Transverse colon (tissue), 4 donors: ENCODE measurements at regions of chr19 and their contacts with region 1.

Region 1: GRCh38 chr19:46487802-46488445 is 7.7 kb downstream of the PNMA8B start:
- DNase-seq: peak; percentile 76
- H3K4me3 ChIP-seq: peak overlapping the region in 1 of 4 donors; percentile 40
- H3K27ac ChIP-seq: no peak overlapping the region
- H3K4me1 ChIP-seq: peaks cover 2 to 25% (median 14%) of the 10 kb centered on the region in 4 donors
- H3K27me3 ChIP-seq: peaks cover 73% of the 10 kb centered on the region
- CTCF ChIP-seq: peak; percentile 88 to 96 (median 91)
- EP300 ChIP-seq: no peak
- POLR2A ChIP-seq: no peak

Region 2: GRCh38 chr19:46283771-46284170 is 204.2 kb before region 1 on chr19:
- in situ Hi-C with region 1: loop called in 3 of 4 experiments (anchors 5 to 25 kb)
- intact Hi-C with region 1: loop called (anchors 5 kb)
- DNase-seq: no peak
- H3K4me3 ChIP-seq: no peak overlapping the region
- H3K27ac ChIP-seq: peak overlapping the region in 2 of 4 donors; percentile 17 to 30
- H3K4me1 ChIP-seq: peaks cover 0 to 6% (median 0%) of the 10 kb centered on the region in 4 donors
- H3K27me3 ChIP-seq: no peaks in the 10 kb centered on the region
- CTCF ChIP-seq: no peak
- EP300 ChIP-seq: no peak
- POLR2A ChIP-seq: no peak

Region 3: DNA sequence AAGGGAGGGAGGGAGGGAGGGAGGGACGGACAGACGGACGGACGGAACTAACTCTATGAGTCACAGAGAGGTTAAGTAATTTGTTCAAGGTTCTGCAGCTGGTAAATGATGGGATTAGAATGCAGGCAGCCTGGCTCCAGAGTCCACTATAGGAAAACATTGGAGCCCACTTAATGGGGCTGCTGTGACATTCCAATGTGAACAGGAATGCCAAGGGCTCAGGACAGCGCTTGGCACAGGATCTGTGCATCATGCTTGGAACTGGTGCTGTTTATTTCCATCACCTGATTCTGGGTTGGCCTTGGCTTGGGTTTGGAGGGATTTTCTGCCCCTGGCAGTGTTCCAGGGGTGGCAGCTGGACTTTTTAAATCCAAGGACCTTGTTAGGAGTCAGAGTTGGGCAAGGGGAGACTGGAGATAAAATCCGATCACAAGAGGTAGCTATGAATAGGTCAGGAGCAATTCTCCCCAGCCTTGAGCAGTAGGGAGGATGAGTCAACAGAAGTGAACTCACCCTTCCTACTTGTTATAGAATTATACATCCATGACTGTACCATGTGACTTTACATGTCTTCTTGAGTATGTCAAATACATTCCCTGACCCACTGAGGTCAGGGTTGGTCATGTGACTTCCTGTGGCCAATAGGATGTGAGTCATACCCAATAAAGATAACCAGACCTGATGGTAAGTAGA is 198.9 kb before region 1 on chr19:
- in situ Hi-C with region 1: loop called in 3 of 4 experiments (anchors 5 to 25 kb)
- intact Hi-C with region 1: loop called (anchors 5 kb)
- DNase-seq: no peak
- H3K4me3 ChIP-seq: no peak overlapping the region
- H3K27ac ChIP-seq: peak overlapping the region in 3 of 4 donors; percentile 13 to 41 (median 16)
- H3K4me1 ChIP-seq: no peaks in the 10 kb centered on the region
- H3K27me3 ChIP-seq: no peaks in the 10 kb centered on the region
- CTCF ChIP-seq: no peak
- EP300 ChIP-seq: no peak
- POLR2A ChIP-seq: no peak

Region 4: DNA sequence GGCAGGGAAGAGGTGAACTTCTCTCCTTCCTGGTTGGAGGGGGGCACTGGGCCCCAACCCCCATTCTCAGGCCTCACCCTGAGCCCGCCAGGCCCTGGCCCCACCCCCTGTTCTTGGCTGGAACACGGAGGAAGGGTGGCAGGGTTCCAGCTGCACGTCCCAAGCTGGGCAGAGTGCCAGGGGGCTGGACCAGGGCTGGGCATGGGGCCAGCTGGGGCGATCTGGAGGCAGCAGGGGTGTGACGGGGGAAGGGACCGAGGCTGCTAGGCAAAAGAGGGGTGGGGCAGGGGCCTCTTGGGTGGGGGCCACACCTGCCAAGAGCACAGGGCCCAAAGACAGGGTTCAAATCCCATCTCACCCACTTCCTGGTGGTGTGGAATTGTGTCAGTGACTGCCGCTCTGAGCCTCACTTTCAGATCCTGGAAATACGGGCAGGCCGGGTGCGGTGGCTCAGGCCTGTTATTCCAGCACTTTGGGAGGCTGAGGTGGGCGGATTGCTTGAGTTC is 188.9 kb before region 1 on chr19:
- in situ Hi-C with region 1: loop called in 1 of 4 experiments (anchors 25 kb)
- intact Hi-C with region 1: no loop called
- DNase-seq: peak; percentile 98
- H3K4me3 ChIP-seq: peak overlapping the region in 3 of 4 donors; percentile 30 to 51 (median 36)
- H3K27ac ChIP-seq: peak overlapping the region; percentile 88 to 95 (median 93)
- H3K4me1 ChIP-seq: peaks cover 50 to 75% (median 71%) of the 10 kb centered on the region in 4 donors
- H3K27me3 ChIP-seq: no peaks in the 10 kb centered on the region
- CTCF ChIP-seq: no peak
- EP300 ChIP-seq: peak; percentile 94
- POLR2A ChIP-seq: no peak

Region 5: DNA sequence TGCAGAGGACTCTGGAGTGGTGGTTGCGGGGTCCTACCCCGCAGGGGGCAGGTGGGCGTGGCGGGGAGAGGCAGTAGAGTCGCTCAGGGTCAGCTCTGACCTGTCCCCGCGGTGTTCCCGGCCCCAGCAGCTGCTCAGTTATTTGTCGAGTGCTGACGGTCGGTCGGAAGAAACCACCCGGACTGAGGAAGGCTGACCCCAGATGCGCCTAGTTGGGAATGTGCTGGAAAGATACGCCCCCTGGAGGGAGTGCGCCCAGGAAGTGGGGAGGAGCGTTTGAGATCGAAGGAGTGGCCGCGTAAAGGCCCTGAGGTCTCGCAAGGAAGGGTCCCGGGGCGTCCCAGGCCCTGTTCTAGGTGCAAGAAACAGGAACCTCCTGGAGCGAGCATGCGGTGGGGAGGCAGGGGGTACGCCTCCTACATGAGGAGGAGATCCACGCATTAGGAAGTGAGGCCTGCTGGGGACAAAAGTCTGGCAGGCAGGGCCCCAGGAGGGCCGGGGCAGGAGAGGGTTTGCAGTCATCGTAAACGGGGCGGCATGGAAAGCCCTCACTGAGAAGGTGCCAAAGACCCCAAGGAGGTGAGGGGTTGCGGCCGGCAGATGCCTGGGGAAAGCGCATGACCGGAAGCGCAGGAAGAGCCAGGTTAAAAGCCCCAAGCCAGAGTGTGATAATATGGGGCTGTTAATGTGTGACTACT is 83.7 kb before region 1 on chr19:
- in situ Hi-C with region 1: loop called (anchors 5 to 10 kb)
- intact Hi-C with region 1: loop called (anchors 2 kb)
- DNase-seq: peak; percentile 63
- H3K4me3 ChIP-seq: peak overlapping the region in 3 of 4 donors; percentile 37 to 52 (median 40)
- H3K27ac ChIP-seq: peak overlapping the region; percentile 65 to 72 (median 70)
- H3K4me1 ChIP-seq: peaks cover 0 to 25% (median 19%) of the 10 kb centered on the region in 4 donors
- H3K27me3 ChIP-seq: peaks cover 65% of the 10 kb centered on the region
- CTCF ChIP-seq: peak in 3 of 5 experiments; percentile 15 to 38 (median 32)
- EP300 ChIP-seq: no peak
- POLR2A ChIP-seq: peak; percentile 11

Region 6: GRCh38 chr19:46717034-46717723 is 229.3 kb after region 1 on chr19 and contains the start of gene PRKD2:
- in situ Hi-C with region 1: no loop called
- intact Hi-C with region 1: no loop called
- DNase-seq: peak; percentile 94
- H3K4me3 ChIP-seq: peak within 1 kb of the TSS; percentile 81 to 94 (median 92)
- H3K27ac ChIP-seq: peak within 1 kb of the TSS; percentile 95 to 96 (median 95)
- H3K4me1 ChIP-seq: peaks cover 20 to 41% (median 32%) of the 10 kb centered on the region in 4 donors
- H3K27me3 ChIP-seq: no peaks in the 10 kb centered on the region
- CTCF ChIP-seq: no peak
- EP300 ChIP-seq: no peak
- POLR2A ChIP-seq: peak; percentile 48
- total RNA-seq, gene PRKD2: 40.1 to 201 (median 53.5) TPM